ENCODE measurements at regions of chr22 and their contacts with region 1.

Region 1: GRCh38 chr22:50326959-50327710 is at the start of gene DENND6B:
- DNase-seq: peak; percentile 87
- ATAC-seq: peak; percentile 88
- total RNA-seq, gene DENND6B: 14.0 TPM

Region 2: GRCh38 chr22:50250555-50251476 is 76.3 kb before region 1 on chr22 and contains the start of gene HDAC10:
- intact Hi-C with region 1: loop called (anchors 5 kb)
- DNase-seq: peak; percentile 88
- ATAC-seq: peak; percentile 63
- total RNA-seq, gene HDAC10: 32.4 TPM

Region 3: GRCh38 chr22:50269970-50270665 is 57.0 kb before region 1 on chr22 and contains the start of gene MAPK11:
- intact Hi-C with region 1: loop called (anchors 2 kb)
- DNase-seq: no peak
- ATAC-seq: peak; percentile 35
- total RNA-seq, gene MAPK11: 20.4 TPM

Measured in sciatic nerve (tissue), 2 donors.